CD8-positive, alpha-beta T cell (primary cell): ENCODE measurements at regions of chr2 and their contacts with region 1.

Region 1: DNA sequence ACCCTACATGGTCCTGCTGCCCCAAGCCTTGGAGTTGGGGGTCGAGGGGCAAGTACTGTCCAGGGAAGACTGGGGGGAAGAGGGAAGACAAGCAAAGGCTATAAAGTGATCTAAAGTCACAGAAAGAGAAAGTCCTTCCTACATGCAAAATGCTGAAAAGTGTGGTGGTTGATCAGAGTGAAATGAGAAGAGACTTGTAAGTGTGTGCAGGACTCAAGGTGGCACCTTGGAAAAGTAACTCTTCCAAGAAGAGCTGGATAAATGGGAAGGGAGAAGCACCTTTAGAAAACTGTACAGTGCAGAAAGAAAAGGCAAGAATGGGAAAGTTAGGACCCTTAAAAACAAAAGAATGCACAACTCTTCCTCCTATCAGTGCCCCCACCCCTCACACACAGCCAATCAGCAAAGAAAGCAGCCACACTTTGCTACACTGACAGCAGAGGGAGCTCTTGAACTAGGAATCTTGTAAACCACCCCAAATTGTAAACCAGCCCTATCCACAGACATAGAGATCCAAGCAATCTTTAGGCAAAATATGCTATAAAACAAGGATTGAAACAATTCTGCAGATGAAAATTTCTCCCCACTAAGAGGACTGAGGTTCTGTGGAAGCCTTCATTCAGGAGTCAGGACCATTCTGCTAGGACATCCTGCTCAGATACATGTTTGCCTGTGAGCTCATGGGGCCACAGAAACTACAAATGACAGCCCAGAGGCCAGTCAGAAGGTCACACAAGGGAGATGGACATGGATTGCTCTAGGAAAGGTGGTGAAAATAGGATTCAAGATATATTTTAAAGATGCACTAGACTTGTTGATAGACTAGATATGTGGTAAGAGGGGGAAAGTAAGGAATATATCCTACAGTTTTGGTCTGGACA is 146.4 kb downstream of the FTCDNL1 start:
- DNase-seq: peak in 2 of 9 experiments; percentile 26 to 33
- ATAC-seq: no peak
- H3K4me3 ChIP-seq: no peak overlapping the region
- H3K4me3 Mint-ChIP-seq: no peak overlapping the region
- H3K27ac ChIP-seq: no peak overlapping the region
- H3K27ac Mint-ChIP-seq: no peak overlapping the region
- H3K4me1 ChIP-seq: no peaks in the 10 kb centered on the region
- H3K4me1 Mint-ChIP-seq: no peaks in the 10 kb centered on the region
- H3K27me3 ChIP-seq: no peaks in the 10 kb centered on the region
- H3K27me3 Mint-ChIP-seq: peaks cover 4% of the 10 kb centered on the region
- CTCF ChIP-seq: no peak

Region 2: GRCh38 chr2:198173242-198173641 is 1531.4 kb before region 1 on chr2:
- CTCF ChIA-PET with region 1: no interaction called
- POLR2A ChIA-PET with region 1: no interaction called
- intact Hi-C with region 1: no loop called
- DNase-seq: no peak
- ATAC-seq: no peak
- H3K4me3 ChIP-seq: no peak overlapping the region
- H3K4me3 Mint-ChIP-seq: no peak overlapping the region
- H3K27ac ChIP-seq: no peak overlapping the region
- H3K27ac Mint-ChIP-seq: no peak overlapping the region
- H3K4me1 ChIP-seq: no peaks in the 10 kb centered on the region
- H3K4me1 Mint-ChIP-seq: no peaks in the 10 kb centered on the region
- H3K27me3 ChIP-seq: no peaks in the 10 kb centered on the region
- H3K27me3 Mint-ChIP-seq: peaks cover 3% of the 10 kb centered on the region
- CTCF ChIP-seq: no peak

Region 3: DNA sequence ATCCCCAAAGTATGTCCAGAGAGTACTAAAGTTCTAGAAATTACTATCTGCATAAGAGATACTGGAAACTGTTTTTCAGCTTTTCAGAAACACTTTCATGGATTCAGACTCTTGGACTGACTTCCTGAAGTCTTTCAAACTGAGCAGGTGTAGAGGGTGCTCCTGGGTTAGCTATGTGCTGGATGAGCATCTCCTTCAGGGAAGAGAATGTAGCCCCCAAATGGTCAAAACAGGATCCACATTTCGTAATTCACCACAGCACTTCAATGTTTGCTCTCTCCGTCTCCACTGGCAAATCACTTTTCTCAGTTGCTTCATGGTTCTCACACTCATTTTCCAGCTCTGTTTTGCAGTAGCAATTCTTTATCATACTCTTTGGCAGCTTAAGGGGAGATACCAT is 223.6 kb before region 1 on chr2:
- CTCF ChIA-PET with region 1: no interaction called
- POLR2A ChIA-PET with region 1: no interaction called
- intact Hi-C with region 1: no loop called
- DNase-seq: no peak
- ATAC-seq: no peak
- H3K4me3 ChIP-seq: no peak overlapping the region
- H3K4me3 Mint-ChIP-seq: no peak overlapping the region
- H3K27ac ChIP-seq: no peak overlapping the region
- H3K27ac Mint-ChIP-seq: no peak overlapping the region
- H3K4me1 ChIP-seq: no peaks in the 10 kb centered on the region
- H3K4me1 Mint-ChIP-seq: no peaks in the 10 kb centered on the region
- H3K27me3 ChIP-seq: no peaks in the 10 kb centered on the region
- H3K27me3 Mint-ChIP-seq: peaks cover 12% of the 10 kb centered on the region
- CTCF ChIP-seq: no peak

Region 4: DNA sequence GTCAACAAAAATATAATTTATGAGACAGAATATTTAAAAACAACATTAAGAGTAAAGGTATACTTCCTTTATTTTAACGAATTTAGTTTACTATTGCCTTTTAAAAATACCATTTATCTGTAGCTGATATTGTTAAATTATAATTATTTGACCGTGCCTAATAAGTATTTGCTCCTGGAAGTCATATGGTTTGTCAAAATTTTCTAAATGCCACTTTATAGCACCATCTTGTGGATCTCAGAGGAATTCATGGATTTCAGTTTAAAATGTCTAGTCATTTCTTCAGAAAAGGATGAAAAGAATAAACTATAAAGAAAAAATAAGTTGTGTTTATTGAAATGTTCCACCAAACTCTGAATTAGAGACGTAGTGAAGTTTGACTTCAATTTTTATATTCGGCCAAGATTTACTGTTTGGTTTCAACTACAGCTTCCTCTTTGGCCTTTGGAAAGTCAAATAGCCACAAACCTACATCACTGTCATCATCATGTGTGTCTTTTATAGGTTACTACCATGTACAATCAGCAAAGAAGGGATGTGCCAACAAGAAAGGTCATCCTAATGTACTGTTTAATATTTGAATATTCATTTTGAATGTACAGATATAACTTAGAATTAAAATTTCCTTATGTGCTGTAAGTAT is 156.7 kb after region 1 on chr2:
- CTCF ChIA-PET with region 1: no interaction called
- POLR2A ChIA-PET with region 1: no interaction called
- intact Hi-C with region 1: loop called (anchors 2 to 5 kb)
- DNase-seq: peak in 2 of 9 experiments; percentile 7 to 25
- ATAC-seq: no peak
- H3K4me3 ChIP-seq: no peak overlapping the region
- H3K4me3 Mint-ChIP-seq: no peak overlapping the region
- H3K27ac ChIP-seq: no peak overlapping the region
- H3K27ac Mint-ChIP-seq: no peak overlapping the region
- H3K4me1 ChIP-seq: no peaks in the 10 kb centered on the region
- H3K4me1 Mint-ChIP-seq: no peaks in the 10 kb centered on the region
- H3K27me3 ChIP-seq: no peaks in the 10 kb centered on the region
- H3K27me3 Mint-ChIP-seq: peaks cover 19% of the 10 kb centered on the region
- CTCF ChIP-seq: peak; percentile 55

Region 5: DNA sequence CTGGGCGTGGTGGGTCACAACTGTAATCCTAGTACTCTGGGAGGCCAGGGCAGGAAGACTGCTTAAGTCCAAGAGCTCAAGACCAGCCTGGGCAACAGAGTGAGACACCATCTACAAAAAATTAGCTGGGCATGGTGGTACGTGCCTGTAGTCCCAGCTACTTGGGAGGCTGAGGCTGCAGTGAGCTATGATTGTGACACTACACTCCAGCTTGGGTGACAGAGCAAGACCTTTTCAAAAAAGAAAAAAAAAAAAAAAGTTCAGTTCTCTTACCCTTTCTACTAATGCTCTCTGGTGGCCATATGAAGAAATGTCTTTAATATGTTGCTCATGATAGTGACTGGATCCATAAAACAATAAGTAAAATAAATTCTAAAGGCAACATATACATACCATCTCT is 235.8 kb after region 1 on chr2:
- CTCF ChIA-PET with region 1: no interaction called
- POLR2A ChIA-PET with region 1: no interaction called
- intact Hi-C with region 1: loop called in 1 of 2 experiments (anchors 10 kb)
- DNase-seq: peak in 2 of 9 experiments; percentile 11 to 15
- ATAC-seq: peak; percentile 54
- H3K4me3 ChIP-seq: no peak overlapping the region
- H3K4me3 Mint-ChIP-seq: no peak overlapping the region
- H3K27ac ChIP-seq: no peak overlapping the region
- H3K27ac Mint-ChIP-seq: no peak overlapping the region
- H3K4me1 ChIP-seq: no peaks in the 10 kb centered on the region
- H3K4me1 Mint-ChIP-seq: peaks cover 10% of the 10 kb centered on the region
- H3K27me3 ChIP-seq: no peaks in the 10 kb centered on the region
- H3K27me3 Mint-ChIP-seq: no peaks in the 10 kb centered on the region
- CTCF ChIP-seq: no peak